Spleen (tissue), 13 donors: ENCODE measurements at regions of chr20 and their contacts with region 1.

Region 1: DNA sequence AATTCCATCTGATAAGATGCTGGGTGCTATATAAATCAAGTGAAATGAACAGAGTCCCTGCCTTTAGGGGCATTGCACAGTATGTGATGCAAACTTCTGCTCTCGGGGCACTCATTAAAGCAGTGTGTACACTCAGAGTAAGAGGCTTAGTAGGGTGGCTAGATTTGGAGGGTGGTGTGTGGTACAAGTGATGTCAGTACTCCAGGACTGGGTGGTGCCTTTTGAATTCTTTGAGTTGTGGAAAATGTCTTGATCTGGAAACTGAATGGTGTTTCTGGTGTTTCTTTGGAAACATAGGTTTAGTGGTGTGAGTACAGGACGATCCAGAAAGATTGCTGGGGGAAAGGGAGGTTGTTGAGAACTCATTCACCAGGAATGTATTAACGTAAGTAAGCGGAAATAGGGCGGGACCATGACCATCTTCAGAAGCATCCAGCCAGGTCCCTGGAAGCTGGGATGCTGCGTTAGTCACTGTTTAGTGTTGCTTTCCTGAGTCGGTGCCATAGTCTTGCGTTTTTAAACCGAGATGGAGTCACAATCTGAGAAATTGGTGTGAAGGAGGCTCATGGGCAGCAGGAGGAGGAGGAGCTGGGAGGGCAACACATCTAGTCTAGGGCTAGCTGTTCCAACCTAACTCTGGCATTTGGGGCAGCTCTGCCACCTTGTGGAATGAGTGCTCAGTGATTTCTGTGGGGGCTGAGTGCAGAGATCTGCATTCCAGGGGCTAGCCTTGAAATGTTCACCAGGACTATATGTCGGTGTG is 70.3 kb downstream of the SCAND1 start:
- DNase-seq: peak; percentile 82
- H3K4me3 ChIP-seq: no peak overlapping the region
- H3K27ac ChIP-seq: peak overlapping the region in 5 of 8 donors; percentile 48 to 68 (median 57)
- H3K4me1 ChIP-seq: peaks cover 6 to 39% (median 14%) of the 10 kb centered on the region in 6 donors
- H3K27me3 ChIP-seq: no peaks in the 10 kb centered on the region
- CTCF ChIP-seq: peak; percentile 21 to 79 (median 65)
- POLR2A ChIP-seq: no peak

Region 2: DNA sequence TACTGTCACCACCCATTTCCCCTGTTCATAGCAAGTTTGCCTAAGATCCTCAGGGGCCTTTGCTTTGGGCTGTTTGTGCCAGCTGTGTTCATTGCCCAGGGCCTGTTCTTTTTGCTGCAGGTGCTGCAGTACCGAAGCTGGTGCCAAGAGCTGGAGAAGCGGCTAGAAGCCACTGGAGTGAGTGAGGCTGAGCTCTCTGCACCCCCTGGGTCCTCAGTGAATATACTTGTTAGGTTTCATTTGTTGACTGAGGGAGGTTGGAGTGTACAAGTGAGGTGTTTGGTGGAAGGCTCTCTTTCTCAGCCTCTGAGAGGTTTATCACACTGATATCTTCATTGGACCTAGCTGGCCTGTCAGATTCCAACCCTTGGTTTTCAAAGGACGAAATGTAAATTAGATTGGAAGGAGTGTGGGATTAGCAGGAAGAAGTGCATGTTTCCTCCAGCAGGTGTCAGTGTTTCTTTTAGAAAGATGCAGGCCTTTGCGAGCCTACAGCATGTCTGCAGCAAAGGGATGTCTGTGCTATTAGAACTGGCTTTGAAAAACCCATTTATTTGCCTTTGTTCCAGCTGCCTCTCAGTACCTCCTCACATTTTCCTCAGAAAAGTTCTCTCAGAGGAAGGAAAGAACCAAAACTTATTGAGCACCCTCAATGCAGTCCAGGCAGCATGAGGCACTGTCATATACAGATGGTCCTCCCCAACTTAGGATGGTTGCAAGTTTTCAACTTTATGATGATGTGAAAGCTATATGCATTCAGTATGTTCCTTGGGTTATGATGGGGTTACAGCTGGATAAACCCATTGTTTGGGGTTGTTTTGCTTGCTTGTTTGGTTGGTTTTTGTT is 420.3 kb before region 1 on chr20:
- intact Hi-C with region 1: loop called (anchors 5 kb)
- DNase-seq: no peak
- H3K4me3 ChIP-seq: no peak overlapping the region
- H3K27ac ChIP-seq: no peak overlapping the region
- H3K4me1 ChIP-seq: peaks cover 0 to 23% (median 3%) of the 10 kb centered on the region in 6 donors
- H3K27me3 ChIP-seq: no peaks in the 10 kb centered on the region
- CTCF ChIP-seq: peak; percentile 75 to 90 (median 82)
- POLR2A ChIP-seq: no peak

Region 3: DNA sequence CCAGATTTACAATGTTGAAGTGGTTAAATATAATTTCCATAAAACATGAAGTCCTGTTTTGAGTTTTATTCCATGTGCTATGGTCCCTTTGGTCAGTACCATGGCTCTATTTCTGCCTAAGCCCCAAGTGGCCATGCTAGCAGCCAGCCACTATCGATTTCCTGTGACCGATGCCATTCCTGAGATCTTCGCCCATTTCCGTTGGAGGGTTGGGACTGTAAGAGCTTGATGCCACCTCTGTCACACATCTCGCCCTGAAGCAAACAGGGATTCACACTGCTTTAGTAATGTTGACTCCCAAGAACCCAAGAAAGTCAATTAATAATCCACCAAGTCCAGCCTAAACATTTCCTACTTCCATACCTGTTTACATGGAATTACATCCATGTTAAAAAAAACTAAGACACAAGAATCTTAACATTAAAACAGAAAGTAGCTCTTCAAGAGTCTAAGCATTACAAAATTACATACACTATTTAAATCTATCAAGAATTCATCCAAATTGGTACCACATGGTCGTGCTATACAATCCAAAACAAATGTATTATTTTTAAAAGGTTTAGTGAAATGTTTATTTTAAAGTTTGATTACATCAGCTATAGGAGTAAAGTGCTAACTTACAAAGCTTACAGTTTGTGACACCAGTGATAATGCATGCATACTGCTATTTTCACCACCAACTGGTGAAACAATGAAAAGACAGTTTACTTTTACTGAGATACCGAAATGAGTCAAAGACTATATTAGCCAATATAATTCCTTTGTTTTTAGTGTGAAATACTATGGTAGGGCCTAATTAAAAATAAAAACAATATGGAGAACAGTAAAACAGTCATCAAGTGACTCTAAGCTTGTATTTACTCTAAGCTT is 144.4 kb before region 1 on chr20:
- intact Hi-C with region 1: loop called (anchors 10 kb)
- DNase-seq: no peak
- H3K4me3 ChIP-seq: peak overlapping the region; percentile 64 to 88 (median 78)
- H3K27ac ChIP-seq: peak overlapping the region in 6 of 8 donors; percentile 48 to 100 (median 100)
- H3K4me1 ChIP-seq: peaks cover 63 to 84% (median 81%) of the 10 kb centered on the region in 6 donors
- H3K27me3 ChIP-seq: no peaks in the 10 kb centered on the region
- CTCF ChIP-seq: peak in 1 of 11 experiments; percentile 12
- POLR2A ChIP-seq: no peak

Region 4: DNA sequence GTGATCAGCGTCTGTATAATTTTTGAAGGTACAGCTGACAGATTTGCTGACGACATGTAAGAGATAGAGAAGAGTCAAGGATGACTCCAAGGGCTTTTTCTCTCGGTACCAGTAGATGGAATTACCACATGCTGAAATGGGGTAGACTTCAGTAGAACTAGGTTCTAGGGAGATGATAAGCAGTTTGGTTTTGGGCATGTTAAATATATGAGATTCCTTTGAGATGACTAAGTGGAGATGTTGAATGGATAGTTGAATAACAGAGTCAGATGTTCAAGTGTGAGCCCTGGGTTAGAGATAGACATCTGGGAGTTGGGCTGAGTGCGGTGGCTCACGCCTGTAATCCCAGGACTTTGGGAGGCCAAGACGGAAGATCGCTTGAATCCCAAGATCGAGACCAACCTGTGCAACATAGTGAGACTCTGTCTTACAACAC is 62.1 kb before region 1 on chr20:
- intact Hi-C with region 1: no loop called
- DNase-seq: no peak
- H3K4me3 ChIP-seq: no peak overlapping the region
- H3K27ac ChIP-seq: no peak overlapping the region
- H3K4me1 ChIP-seq: peaks cover 0 to 29% (median 13%) of the 10 kb centered on the region in 6 donors
- H3K27me3 ChIP-seq: no peaks in the 10 kb centered on the region
- CTCF ChIP-seq: no peak
- POLR2A ChIP-seq: no peak